Left ventricle myocardium inferior (tissue), 1 donor: ENCODE measurements at regions of chr3 and their contacts with region 1.

Region 1: GRCh38 chr3:187319699-187320302 is 28.3 kb upstream of the MASP1 start:
- DNase-seq: peak; percentile 55
- H3K4me3 ChIP-seq: peak overlapping the region; percentile 57
- H3K27ac ChIP-seq: peak overlapping the region; percentile 41
- H3K4me1 ChIP-seq: peaks cover 13% of the 10 kb centered on the region
- H3K27me3 ChIP-seq: peaks cover 13% of the 10 kb centered on the region
- CTCF ChIP-seq: peak; percentile 92

Region 2: GRCh38 chr3:187223799-187224198 is 96.0 kb before region 1 on chr3:
- intact Hi-C with region 1: loop called (anchors 5 kb)
- DNase-seq: no peak
- H3K4me3 ChIP-seq: no peak overlapping the region
- H3K27ac ChIP-seq: no peak overlapping the region
- H3K4me1 ChIP-seq: no peaks in the 10 kb centered on the region
- H3K27me3 ChIP-seq: peaks cover 5% of the 10 kb centered on the region
- CTCF ChIP-seq: no peak

Region 3: DNA sequence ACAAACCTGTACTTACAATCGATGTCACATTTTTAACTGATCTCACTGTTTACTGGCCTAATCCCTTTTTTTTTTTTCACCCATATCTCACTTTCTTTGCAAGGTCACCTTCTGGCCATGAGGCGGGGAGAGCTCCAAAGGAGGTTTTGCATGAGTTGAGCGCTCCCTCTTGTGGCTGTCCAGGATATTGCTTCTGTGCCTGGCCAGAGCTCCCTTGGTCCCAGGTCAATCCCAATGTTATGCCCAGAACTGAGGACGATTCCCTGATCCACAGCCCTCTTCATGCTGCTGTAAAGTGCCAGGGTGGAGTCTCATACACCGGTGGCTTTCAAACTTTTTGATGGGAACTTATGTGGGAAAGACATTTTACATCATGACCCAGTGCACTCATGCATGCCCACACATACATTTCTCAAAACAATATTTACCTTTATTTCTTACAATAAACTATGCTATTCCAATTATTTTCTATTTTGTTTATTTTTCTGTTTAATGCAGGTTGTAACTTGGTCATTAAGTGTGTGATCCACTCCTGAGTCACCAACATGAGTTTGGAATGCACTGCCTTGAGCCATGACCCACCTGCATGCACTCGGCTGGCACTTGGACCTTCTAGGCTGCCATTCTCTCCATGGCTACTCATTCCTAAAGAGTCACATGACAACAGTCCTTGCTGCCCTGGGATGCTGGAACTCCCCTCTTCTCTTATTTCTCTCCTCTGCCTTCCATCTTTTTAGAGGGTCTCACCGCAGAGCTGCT is 360.0 kb after region 1 on chr3:
- intact Hi-C with region 1: loop called (anchors 2 kb)
- DNase-seq: peak; percentile 73
- H3K4me3 ChIP-seq: no peak overlapping the region
- H3K27ac ChIP-seq: no peak overlapping the region
- H3K4me1 ChIP-seq: peaks cover 10% of the 10 kb centered on the region
- H3K27me3 ChIP-seq: peaks cover 34% of the 10 kb centered on the region
- CTCF ChIP-seq: peak; percentile 95